ENCODE measurements at regions of chr2 and their contacts with region 1.

Region 1: DNA sequence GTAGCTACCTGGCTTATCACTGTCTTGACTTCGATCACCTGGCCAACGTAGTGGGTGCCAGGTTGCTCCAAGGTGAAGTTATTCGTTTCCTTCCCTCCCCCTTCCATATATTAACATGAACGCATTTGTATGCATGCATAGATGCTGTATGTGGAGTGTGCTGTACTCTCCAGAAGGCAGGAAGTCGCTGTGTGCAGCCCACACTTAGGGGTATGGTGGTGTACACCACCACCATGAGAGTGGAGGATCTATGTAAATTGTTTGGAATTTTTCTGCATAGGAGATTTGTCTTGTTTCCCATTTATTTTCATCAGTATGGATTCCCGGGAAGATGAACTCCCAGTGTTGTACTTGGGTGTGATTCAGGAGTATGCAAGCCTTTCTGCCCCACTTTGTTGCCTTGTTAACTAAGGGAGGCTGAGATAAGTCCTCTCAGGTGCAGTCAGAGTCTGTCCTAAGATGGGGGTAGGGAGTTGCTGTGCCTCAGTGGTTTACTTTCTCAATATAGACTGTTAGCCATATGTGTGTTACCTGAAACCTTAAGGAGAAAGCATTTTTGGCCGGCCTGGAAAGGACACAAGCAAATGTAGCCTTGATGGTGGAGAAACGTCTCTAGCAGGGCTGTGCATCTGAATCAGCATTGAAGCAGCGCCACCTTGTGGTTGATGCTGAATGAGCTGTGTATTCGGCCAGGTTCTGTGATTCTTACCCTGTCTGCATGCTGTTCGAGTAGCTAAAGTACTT is 149.8 kb downstream of the TANC1 start:
- DNase-seq: peak; percentile 59 to 93
- H3K4me3 ChIP-seq: no peak overlapping the region
- H3K27ac ChIP-seq: no peak overlapping the region
- H3K4me1 ChIP-seq: no peaks in the 10 kb centered on the region
- H3K27me3 ChIP-seq: no peaks in the 10 kb centered on the region
- CTCF ChIP-seq: peak; percentile 84 to 97 (median 92)
- EP300 ChIP-seq: no peak
- POLR2A ChIP-seq: no peak
- RAD21 ChIP-seq: peak; percentile 96 to 97

Region 2: DNA sequence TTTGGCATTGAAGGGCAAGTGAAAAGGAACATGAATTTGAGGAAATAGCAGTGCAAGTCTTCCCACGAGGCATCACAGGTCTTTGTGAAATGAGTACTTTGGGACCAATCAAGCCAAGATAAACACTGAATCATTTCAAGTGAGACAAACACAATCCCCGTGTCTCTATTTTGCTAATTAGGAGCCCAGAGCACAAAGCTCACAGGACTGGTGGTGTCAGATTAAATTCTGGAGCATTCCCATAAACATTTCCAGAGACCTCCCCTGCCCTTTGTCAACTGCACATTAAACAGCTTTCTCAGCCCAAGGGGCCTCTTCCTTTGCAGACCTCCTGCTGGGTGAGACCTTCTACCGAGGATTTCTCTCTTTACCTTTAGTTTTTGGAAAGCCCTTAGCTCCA is 272.4 kb before region 1 on chr2:
- CTCF ChIA-PET with region 1: no interaction called
- POLR2A ChIA-PET with region 1: no interaction called
- DNase-seq: no peak
- H3K4me3 ChIP-seq: no peak overlapping the region; a peak in 1 of 8 replicates
- H3K27ac ChIP-seq: no peak overlapping the region
- H3K4me1 ChIP-seq: peaks cover 2 to 6% (median 4%) of the 10 kb centered on the region in 4 experiments; a peak in 3 of 7 replicates
- H3K27me3 ChIP-seq: no peaks in the 10 kb centered on the region
- CTCF ChIP-seq: no peak
- EP300 ChIP-seq: no peak
- POLR2A ChIP-seq: no peak
- RAD21 ChIP-seq: no peak

Region 3: GRCh38 chr2:158903711-158904443 is 214.4 kb before region 1 on chr2:
- CTCF ChIA-PET with region 1: interaction called, 28 read pairs
- POLR2A ChIA-PET with region 1: interaction called, 4 read pairs
- DNase-seq: no peak
- H3K4me3 ChIP-seq: no peak overlapping the region
- H3K27ac ChIP-seq: no peak overlapping the region
- H3K4me1 ChIP-seq: no peaks in the 10 kb centered on the region
- H3K27me3 ChIP-seq: no peaks in the 10 kb centered on the region
- CTCF ChIP-seq: no peak
- EP300 ChIP-seq: no peak
- POLR2A ChIP-seq: no peak
- RAD21 ChIP-seq: no peak

Region 4: GRCh38 chr2:159044804-159045286 is 73.4 kb before region 1 on chr2:
- CTCF ChIA-PET with region 1: interaction called, 12 read pairs
- POLR2A ChIA-PET with region 1: no interaction called
- DNase-seq: peak in 1 of 2 experiments; percentile 43
- H3K4me3 ChIP-seq: no peak overlapping the region
- H3K27ac ChIP-seq: no peak overlapping the region
- H3K4me1 ChIP-seq: peaks cover 0 to 7% (median 2%) of the 10 kb centered on the region in 4 experiments; a peak in 1 of 7 replicates
- H3K27me3 ChIP-seq: no peaks in the 10 kb centered on the region
- CTCF ChIP-seq: no peak
- EP300 ChIP-seq: no peak
- POLR2A ChIP-seq: no peak
- RAD21 ChIP-seq: no peak

Region 5: GRCh38 chr2:159076241-159076640 is 42.0 kb before region 1 on chr2:
- CTCF ChIA-PET with region 1: interaction called, 11 read pairs
- POLR2A ChIA-PET with region 1: no interaction called
- DNase-seq: no peak
- H3K4me3 ChIP-seq: no peak overlapping the region
- H3K27ac ChIP-seq: no peak overlapping the region
- H3K4me1 ChIP-seq: no peaks in the 10 kb centered on the region
- H3K27me3 ChIP-seq: no peaks in the 10 kb centered on the region
- CTCF ChIP-seq: no peak
- EP300 ChIP-seq: no peak
- POLR2A ChIP-seq: no peak
- RAD21 ChIP-seq: no peak

Region 6: DNA sequence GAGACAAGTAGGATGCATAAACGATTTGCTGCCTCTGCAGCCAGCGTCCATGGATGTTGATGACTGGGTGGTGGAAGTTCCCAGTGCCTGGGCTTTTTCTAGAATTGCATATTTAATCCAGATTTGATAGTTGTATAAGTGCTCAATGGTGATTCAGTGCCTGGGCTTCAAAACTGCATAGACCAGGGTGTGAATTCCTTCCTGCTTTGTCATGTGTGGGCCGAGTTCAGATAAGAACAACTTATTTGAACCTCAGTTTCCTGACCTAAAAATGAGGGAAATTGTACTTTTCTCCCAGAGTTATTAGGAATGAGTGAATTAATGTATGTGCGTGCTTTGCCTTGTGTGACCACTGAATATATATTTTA is 13.6 kb after region 1 on chr2:
- CTCF ChIA-PET with region 1: interaction called, 34 read pairs
- POLR2A ChIA-PET with region 1: interaction called, 4 read pairs
- DNase-seq: no peak
- H3K4me3 ChIP-seq: no peak overlapping the region
- H3K27ac ChIP-seq: no peak overlapping the region
- H3K4me1 ChIP-seq: no peaks in the 10 kb centered on the region
- H3K27me3 ChIP-seq: no peaks in the 10 kb centered on the region
- CTCF ChIP-seq: no peak
- EP300 ChIP-seq: no peak
- POLR2A ChIP-seq: no peak
- RAD21 ChIP-seq: no peak

Region 7: GRCh38 chr2:159155320-159155719 is 37.0 kb after region 1 on chr2:
- CTCF ChIA-PET with region 1: interaction called, 28 read pairs
- POLR2A ChIA-PET with region 1: no interaction called
- DNase-seq: peak in 1 of 2 experiments; percentile 31
- H3K4me3 ChIP-seq: no peak overlapping the region
- H3K27ac ChIP-seq: no peak overlapping the region
- H3K4me1 ChIP-seq: peaks cover 0 to 4% (median 1%) of the 10 kb centered on the region in 4 experiments; a peak in 4 of 7 replicates
- H3K27me3 ChIP-seq: no peaks in the 10 kb centered on the region
- CTCF ChIP-seq: no peak
- EP300 ChIP-seq: no peak
- POLR2A ChIP-seq: no peak
- RAD21 ChIP-seq: 0 out of 4 replicates have a peak, but pooled peaks of 1 of the 2 experiments have one; percentile 1

Region 8: DNA sequence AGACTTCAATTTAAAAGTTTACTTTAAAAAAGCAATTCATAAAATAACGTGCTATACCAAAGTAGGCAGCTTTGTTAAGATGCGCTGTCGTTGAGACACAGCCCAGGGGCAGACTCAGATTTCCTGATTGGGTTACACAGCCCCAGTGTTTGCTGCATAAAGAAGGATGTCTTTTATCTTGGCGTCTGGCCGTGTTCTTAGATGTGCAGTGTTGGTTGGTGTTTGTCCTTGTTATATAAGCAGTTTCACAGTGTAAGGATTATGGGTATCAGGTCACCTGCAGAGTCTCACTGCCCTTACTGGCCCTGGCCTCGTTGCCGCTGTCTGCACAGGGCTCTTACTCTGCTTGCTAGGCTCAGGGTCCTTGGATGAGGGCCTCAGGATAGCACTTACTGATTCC is 59.7 kb after region 1 on chr2:
- CTCF ChIA-PET with region 1: interaction called, 18 read pairs
- POLR2A ChIA-PET with region 1: no interaction called
- DNase-seq: no peak
- H3K4me3 ChIP-seq: no peak overlapping the region
- H3K27ac ChIP-seq: no peak overlapping the region
- H3K4me1 ChIP-seq: no peaks in the 10 kb centered on the region
- H3K27me3 ChIP-seq: no peaks in the 10 kb centered on the region
- CTCF ChIP-seq: no peak
- EP300 ChIP-seq: no peak
- POLR2A ChIP-seq: no peak
- RAD21 ChIP-seq: no peak

Measured in H1 (cell line).